Activated CD8-positive, alpha-beta T cell treated with anti-CD3 and anti-CD28 coated beads for 36 hours (primary cell): ENCODE measurements at regions of chr1 and their contacts with region 1.

Region 1: DNA sequence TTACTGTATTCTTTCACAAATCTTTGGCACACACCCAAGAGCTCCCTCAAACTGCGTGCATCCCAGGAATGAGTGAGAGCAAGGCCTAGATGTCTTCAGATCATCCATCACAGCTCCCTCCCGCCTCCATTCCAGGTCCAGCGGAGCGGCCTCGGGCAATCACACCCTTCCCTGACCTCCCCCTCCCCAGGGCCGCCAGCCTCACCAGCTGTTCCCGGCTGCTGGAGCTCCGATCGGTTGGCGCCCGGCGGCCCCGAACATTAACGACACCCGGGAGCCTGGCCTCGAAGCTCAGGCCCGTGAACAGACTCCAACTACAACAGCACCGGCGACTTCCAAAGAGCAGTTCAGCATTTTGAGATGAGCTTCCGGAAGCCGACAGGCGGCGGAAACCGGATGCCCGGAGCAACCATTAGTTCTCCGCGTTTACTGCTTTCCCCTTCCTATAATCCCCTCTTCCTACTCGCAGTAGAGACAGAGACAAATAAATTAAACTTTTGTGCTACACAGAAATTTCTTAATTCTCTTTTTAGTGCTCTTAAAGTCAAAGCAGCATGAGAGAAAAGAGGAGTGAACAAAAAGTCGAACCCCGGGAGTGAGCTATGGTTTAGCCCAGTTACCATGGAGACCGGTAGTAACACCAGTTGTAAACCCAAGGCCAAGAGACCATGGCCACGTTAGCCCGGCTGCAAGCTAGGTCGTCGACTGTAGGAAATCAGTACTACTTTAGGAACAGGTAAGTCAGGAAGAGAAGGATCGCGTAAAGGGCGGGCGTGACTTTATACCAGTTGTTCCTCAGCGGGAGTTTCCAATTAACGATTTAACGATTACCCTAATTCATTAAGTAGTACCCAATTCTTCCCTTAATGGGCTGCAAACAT is at the starts of genes GPATCH2 and SPATA17:
- DNase-seq: peak; percentile 81
- ATAC-seq: peak; percentile 88
- H3K4me3 Mint-ChIP-seq: peak within 1 kb of the TSS; percentile 82
- H3K27ac Mint-ChIP-seq: peak within 1 kb of the TSS; percentile 100
- H3K4me1 Mint-ChIP-seq: peaks cover 33% of the 10 kb centered on the region
- H3K27me3 Mint-ChIP-seq: no peaks in the 10 kb centered on the region
- CTCF ChIP-seq: no peak
- total RNA-seq, gene GPATCH2: 6.0 to 6.6 TPM
- total RNA-seq, gene SPATA17: not detected

Region 2: GRCh38 chr1:217620814-217621213 is 10.1 kb before region 1 on chr1:
- CTCF ChIA-PET with region 1: interaction called, 4 read pairs
- POLR2A ChIA-PET with region 1: interaction called, 11 read pairs
- intact Hi-C with region 1: no loop called
- DNase-seq: no peak
- ATAC-seq: peak; percentile 98
- H3K4me3 Mint-ChIP-seq: no peak overlapping the region
- H3K27ac Mint-ChIP-seq: no peak overlapping the region
- H3K4me1 Mint-ChIP-seq: peaks cover 30% of the 10 kb centered on the region
- H3K27me3 Mint-ChIP-seq: no peaks in the 10 kb centered on the region
- CTCF ChIP-seq: no peak

Region 3: DNA sequence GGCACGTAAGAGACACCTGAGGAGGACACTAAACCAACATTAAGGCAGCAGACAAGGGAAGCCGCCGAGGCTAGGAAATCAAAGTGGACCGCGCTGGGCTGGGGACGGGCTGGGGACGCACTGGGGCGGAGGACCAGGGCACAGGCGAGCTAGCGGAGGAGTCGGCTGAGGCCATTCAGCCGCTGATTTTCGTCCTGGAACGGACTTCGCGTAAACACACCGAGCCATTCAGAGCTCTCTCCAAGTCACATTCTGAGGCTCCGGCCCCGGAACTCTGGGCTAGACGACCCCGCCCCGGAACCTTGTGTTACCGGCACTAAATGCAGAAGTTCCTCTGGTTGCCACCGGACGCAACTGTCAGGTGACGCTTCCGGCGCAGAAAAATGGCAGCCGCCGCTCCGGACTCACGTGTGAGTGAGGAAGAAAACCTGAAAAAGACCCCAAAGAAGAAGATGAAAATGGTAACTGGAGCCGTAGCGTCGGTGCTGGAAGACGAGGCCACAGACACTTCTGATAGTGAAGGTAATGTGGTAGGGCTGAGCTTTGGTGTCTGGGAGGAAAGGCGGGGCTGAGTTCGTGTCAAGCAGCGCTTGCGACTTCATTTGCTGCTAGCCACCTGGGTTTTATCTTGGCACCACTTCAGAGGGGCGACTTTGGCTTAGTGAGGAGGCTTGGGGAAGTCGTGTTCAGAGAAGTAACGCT is 654.1 kb after region 1 on chr1 and contains the start of gene RRP15:
- CTCF ChIA-PET with region 1: no interaction called
- POLR2A ChIA-PET with region 1: no interaction called
- intact Hi-C with region 1: loop called (anchors 10 kb)
- DNase-seq: peak; percentile 93
- ATAC-seq: peak; percentile 98
- H3K4me3 Mint-ChIP-seq: peak within 1 kb of the TSS; percentile 95
- H3K27ac Mint-ChIP-seq: peak within 1 kb of the TSS; percentile 94
- H3K4me1 Mint-ChIP-seq: peaks cover 29% of the 10 kb centered on the region
- H3K27me3 Mint-ChIP-seq: peaks cover 6% of the 10 kb centered on the region
- CTCF ChIP-seq: no peak
- total RNA-seq, gene RRP15: 20.9 to 24.3 TPM